ENCODE measurements at regions of chr11 and their contacts with region 1.

Region 1: DNA sequence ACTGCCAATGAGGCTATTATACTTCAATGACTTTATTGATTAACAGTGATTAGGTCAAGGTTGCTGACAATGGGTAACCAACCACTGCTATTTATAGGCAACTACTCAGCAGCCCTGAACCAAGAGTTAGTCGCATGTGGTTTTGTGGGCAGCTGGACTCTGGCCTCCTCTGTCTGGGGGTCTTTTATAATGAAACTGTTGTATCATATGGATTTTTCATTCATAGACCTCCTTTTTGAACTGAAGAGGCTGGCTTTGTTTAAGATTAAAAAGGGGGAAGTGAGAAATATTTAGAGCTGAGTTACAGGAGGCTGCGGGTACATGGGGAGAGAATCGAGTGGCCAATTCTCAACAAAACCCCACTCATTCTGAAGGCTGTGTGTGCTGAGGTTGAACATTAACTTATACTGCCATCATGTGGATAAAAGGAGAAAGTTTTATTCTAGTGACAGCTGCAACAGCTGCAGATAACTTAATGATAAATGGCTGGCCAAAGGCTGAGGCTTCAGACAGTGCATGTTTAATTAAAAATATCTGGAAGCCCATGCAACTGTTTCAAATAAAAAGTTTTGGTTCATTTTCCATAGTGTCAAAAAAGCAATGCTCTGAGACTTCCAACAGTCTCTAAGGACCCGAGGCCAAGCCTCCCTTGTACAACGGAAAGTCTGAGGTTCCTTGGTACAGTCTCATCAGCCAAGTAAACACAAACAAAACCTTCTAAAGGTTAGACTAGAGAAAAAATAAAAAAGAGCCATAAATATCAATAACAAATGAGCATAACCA is 682.6 kb downstream of the KCNA4 start:
- DNase-seq: peak; percentile 48
- H3K4me3 ChIP-seq: no peak overlapping the region
- H3K27ac ChIP-seq: no peak overlapping the region
- H3K4me1 ChIP-seq: peaks cover 16% of the 10 kb centered on the region
- H3K27me3 ChIP-seq: no peaks in the 10 kb centered on the region
- CTCF ChIP-seq: peak; percentile 59 to 64

Region 2: DNA sequence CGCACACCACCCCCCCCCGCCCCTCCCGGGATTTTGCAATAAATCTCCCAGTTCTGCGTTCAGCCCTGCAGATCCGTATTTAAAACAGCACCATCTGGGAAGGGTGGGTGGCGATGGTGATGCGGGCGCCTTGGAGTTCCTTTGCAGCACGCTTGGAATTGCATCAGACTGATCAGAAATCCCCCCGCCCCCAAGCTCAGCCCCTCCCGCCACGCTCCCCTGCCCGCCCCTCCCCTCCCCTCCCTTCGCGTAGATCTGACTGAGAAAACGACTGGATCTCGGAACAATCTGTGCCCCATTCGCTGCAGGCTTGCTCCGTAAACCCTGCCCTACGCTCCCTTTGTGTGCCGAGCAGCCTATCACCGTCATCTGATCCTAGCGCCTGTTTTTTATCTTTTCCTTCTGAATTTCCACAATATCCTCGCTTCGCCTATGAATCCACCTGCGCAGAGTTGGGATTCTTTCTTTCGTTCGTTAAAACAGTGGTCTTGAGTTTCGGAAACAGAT is 1615.8 kb before region 1 on chr11:
- CTCF ChIA-PET with region 1: no interaction called
- dilution Hi-C with region 1: no loop called
- in situ Hi-C with region 1: loop called in 1 of 2 experiments (anchors 10 kb)
- intact Hi-C with region 1: no loop called
- DNase-seq: peak; percentile 39
- H3K4me3 ChIP-seq: peak overlapping the region; percentile 41 to 45 (median 44)
- H3K27ac ChIP-seq: no peak overlapping the region
- H3K4me1 ChIP-seq: peaks cover 14% of the 10 kb centered on the region
- H3K27me3 ChIP-seq: peaks cover 45% of the 10 kb centered on the region
- CTCF ChIP-seq: no peak

Region 3: DNA sequence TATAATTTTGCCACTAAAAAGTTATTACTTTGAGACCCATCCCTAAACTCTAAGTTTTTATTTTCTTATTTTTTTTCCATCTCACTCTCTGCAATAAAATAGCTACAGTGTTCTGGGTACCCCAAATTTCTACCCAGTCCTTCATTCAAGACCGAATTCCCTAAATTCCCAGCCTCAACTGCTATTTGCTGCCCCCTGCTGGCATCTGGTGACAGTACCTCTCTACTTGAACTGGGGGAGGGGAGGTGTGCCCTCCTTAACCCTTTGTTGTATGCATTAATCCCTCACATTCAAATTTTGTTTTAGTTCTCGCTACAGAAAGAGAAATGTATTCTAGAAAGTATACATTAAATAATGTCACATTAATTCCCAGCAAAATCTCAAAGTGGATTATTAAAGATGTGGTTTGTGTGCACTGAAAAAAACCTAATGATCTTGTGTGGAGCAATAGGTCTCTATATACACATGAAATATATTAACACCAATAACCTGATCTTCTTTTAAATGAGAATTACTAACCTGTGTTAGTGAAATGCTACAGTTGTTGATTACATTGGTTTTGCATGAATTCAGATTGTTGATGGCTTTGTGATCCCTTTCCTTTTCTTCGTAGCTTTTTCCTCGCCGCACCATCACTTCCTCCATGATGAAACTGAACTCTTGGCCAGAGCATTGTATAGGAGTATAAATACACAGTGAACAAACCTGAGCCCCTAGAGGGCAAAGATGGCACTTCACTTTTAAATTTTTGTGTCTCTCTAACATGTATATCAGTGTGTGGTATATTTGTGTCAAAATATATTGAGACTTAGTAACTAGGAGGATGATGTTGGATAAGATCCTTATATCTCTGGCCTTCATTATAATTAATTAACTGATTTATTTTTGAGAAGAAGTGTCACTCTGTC is 636.0 kb before region 1 on chr11:
- CTCF ChIA-PET with region 1: no interaction called
- dilution Hi-C with region 1: no loop called
- in situ Hi-C with region 1: no loop called
- intact Hi-C with region 1: loop called (anchors 10 kb)
- DNase-seq: peak; percentile 20
- H3K4me3 ChIP-seq: no peak overlapping the region
- H3K27ac ChIP-seq: no peak overlapping the region
- H3K4me1 ChIP-seq: peaks cover 20% of the 10 kb centered on the region
- H3K27me3 ChIP-seq: no peaks in the 10 kb centered on the region
- CTCF ChIP-seq: peak; percentile 78 to 93

Region 4: DNA sequence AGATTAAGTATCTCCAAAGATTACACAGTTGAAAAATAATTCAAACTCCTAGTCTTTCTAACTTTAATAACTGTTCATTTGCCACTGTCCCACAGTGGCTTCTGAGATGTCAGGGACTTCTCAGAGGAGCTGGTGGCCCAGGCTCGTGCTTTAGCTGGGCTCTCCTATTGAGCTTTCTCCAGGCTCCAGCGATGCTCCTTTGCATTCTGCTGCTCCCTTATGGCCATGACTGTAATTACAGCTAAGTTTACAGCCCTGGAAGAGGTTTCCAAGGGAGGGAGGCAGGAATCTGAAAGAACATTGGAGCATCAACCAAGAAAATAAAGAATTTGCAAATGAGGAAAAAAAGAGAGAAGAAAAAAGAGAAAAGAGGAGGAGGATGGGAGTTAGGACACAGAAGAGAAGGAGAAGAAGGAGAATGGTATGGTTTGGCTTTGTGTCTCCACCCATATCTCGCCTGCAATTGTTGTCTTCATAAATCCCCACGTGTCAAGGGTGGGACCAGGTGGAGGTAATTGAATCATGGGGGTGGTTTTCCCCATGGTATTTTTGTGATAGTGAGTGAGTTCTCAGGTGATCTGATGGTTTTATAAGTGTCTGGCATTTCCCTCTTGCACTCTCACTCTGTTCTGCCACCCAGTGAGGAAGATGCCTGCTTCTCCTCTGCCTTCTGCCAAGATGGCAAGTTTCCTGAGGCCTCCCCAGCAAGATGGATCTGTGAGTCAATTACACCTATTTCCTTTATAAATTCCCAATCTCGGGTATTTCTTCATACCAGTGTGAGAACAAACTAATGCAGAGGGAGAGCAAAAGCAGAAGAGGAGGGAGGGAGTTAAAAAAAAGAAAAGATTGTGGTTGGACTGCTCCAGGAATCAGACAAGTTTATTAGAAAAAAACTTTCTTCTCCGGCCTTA is 174.4 kb before region 1 on chr11:
- CTCF ChIA-PET with region 1: no interaction called
- dilution Hi-C with region 1: no loop called
- in situ Hi-C with region 1: loop called in 1 of 2 experiments (anchors 25 kb)
- intact Hi-C with region 1: loop called (anchors 1 kb)
- DNase-seq: peak; percentile 55
- H3K4me3 ChIP-seq: no peak overlapping the region
- H3K27ac ChIP-seq: no peak overlapping the region
- H3K4me1 ChIP-seq: peaks cover 4% of the 10 kb centered on the region
- H3K27me3 ChIP-seq: no peaks in the 10 kb centered on the region
- CTCF ChIP-seq: peak; percentile 81 to 91

Region 5: GRCh38 chr11:29251738-29252137 is 82.4 kb before region 1 on chr11:
- CTCF ChIA-PET with region 1: no interaction called
- dilution Hi-C with region 1: no loop called
- in situ Hi-C with region 1: no loop called
- intact Hi-C with region 1: no loop called
- DNase-seq: no peak
- H3K4me3 ChIP-seq: no peak overlapping the region
- H3K27ac ChIP-seq: no peak overlapping the region
- H3K4me1 ChIP-seq: no peaks in the 10 kb centered on the region
- H3K27me3 ChIP-seq: no peaks in the 10 kb centered on the region
- CTCF ChIP-seq: no peak

Region 6: DNA sequence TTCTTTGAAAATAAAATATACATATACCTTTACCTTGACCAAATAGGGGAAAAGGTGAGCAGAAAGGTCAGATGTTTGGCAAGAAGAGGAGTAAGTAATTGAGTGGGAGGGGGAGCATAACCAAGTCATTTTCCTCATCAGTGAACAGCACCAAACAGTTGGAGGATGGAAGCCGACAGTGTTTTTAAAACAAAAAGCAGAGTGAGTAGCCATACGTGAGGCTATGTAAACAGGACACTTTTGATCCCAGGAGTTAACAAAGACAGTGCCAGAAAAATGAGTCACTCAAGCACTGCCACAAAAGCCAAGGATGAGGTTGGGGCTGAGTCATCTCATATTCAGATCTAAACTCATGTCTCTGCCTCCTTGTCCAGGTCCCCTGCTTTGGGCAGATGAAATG is 52.1 kb before region 1 on chr11:
- CTCF ChIA-PET with region 1: no interaction called
- dilution Hi-C with region 1: no loop called
- in situ Hi-C with region 1: loop called in 1 of 2 experiments (anchors 5 kb)
- intact Hi-C with region 1: no loop called
- DNase-seq: peak; percentile 94
- H3K4me3 ChIP-seq: no peak overlapping the region
- H3K27ac ChIP-seq: peak overlapping the region; percentile 40
- H3K4me1 ChIP-seq: peaks cover 30% of the 10 kb centered on the region
- H3K27me3 ChIP-seq: no peaks in the 10 kb centered on the region
- CTCF ChIP-seq: no peak

Region 7: DNA sequence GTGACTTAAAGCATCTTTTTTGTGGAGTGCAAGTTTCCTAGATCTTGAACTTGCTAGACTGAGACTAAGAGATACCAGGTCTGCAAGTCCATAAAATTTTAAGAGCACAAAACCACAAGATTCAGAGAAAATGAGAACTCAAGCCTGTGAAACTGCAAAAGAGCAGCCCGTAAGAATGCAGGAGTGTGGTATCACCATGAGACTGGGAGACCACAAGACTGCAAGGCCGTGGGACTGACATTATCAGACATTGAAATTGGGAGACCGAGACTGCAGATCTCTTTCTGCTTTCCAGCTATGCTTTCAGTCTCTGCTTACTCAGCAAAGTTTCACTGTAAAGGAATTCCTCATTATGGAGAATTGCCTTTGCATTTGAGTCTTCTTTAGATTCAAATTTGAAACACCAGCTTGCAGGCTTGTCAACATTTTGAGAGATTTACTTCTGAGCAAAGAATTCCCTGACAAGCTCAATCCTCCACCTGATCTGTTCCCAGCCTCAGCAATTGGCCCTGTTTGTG is 61.4 kb after region 1 on chr11:
- CTCF ChIA-PET with region 1: no interaction called
- dilution Hi-C with region 1: no loop called
- in situ Hi-C with region 1: no loop called
- intact Hi-C with region 1: no loop called
- DNase-seq: no peak
- H3K4me3 ChIP-seq: no peak overlapping the region
- H3K27ac ChIP-seq: no peak overlapping the region
- H3K4me1 ChIP-seq: no peaks in the 10 kb centered on the region
- H3K27me3 ChIP-seq: peaks cover 5% of the 10 kb centered on the region
- CTCF ChIP-seq: no peak